ENCODE measurements at regions of chr5 and their contacts with region 1.

Region 1: DNA sequence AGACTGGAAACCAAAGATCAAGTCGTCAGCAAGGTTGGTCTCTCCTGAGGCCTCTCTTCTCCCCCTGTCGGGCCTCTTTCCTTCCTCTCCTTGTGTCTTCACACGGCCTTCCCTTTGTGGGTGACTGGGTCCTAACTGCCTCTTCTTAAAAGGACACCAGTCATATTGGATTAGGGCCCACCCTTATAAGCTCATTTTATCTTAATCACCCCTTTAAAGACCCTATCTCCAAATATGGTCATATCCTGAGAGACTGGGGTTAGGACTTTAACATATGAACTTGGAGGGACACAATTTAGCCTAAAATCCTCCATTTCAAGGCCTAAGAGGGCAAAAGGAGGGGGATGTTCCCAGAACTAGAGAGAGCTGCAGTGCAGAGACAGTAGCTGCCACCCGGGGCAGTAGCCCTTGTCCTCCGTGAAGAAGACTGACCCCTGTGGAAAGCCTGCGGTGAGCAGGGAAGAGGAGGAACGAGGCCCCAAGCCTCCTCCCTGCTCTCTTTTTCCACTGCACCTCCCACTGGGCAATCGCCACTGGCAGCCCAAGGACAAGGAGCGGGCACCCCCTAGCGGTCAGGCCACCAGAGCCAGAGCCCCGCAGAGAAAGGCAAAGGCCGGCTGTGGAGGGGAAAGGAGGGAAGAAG is 34.9 kb downstream of the CFAP90 start:
- DNase-seq: peak; percentile 20
- ATAC-seq: peak; percentile 99
- H3K4me3 ChIP-seq: no peak overlapping the region
- H3K27ac ChIP-seq: no peak overlapping the region
- H3K4me1 ChIP-seq: peaks cover 5% of the 10 kb centered on the region
- H3K27me3 ChIP-seq: no peaks in the 10 kb centered on the region; a peak in 1 of 4 replicates
- CTCF ChIP-seq: peak; percentile 97 to 99 (median 97)
- EP300 ChIP-seq: no peak
- POLR2A ChIP-seq: no peak
- RAD21 ChIP-seq: peak; percentile 94

Region 2: GRCh38 chr5:7261049-7261448 is 555.0 kb before region 1 on chr5:
- CTCF ChIA-PET with region 1: interaction called, 16 read pairs
- POLR2A ChIA-PET with region 1: no interaction called
- RAD21 ChIA-PET with region 1: interaction called, 5 read pairs
- SMC1A ChIA-PET with region 1: interaction called, 3 read pairs
- in situ Hi-C with region 1: no loop called
- intact Hi-C with region 1: loop called (anchors 1 kb)
- DNase-seq: no peak
- ATAC-seq: peak; percentile 29; the same call in 1 of the 3 replicates
- H3K4me3 ChIP-seq: no peak overlapping the region
- H3K27ac ChIP-seq: no peak overlapping the region
- H3K4me1 ChIP-seq: no peaks in the 10 kb centered on the region
- H3K27me3 ChIP-seq: no peaks in the 10 kb centered on the region
- CTCF ChIP-seq: peak; percentile 36 to 46 (median 41); a peak in 3 of 6 replicates
- EP300 ChIP-seq: no peak
- POLR2A ChIP-seq: no peak
- RAD21 ChIP-seq: peak; percentile 69

Region 3: DNA sequence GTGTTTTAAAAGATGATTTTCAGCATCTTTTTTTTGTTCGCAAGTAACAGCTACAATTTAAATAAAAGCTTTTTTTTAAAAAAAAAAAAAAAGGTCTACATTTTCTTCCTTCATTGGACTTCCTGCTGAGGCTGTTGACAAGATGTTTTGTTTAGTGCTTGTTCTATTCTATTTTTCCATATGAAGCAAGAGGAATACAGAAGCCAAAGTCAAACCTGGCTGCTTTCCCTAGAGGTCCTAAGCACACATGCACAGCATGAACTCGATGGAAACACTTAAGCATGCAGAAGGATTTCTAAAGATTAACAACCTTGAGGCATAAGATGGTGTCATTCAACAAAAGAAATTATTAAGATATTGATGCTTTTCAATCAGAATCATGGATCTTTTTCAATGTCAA is 315.0 kb before region 1 on chr5:
- CTCF ChIA-PET with region 1: no interaction called
- POLR2A ChIA-PET with region 1: no interaction called
- RAD21 ChIA-PET with region 1: no interaction called
- SMC1A ChIA-PET with region 1: no interaction called
- in situ Hi-C with region 1: no loop called
- intact Hi-C with region 1: no loop called
- DNase-seq: no peak
- ATAC-seq: no peak
- H3K4me3 ChIP-seq: no peak overlapping the region
- H3K27ac ChIP-seq: no peak overlapping the region
- H3K4me1 ChIP-seq: no peaks in the 10 kb centered on the region
- H3K27me3 ChIP-seq: no peaks in the 10 kb centered on the region
- CTCF ChIP-seq: no peak
- EP300 ChIP-seq: no peak
- POLR2A ChIP-seq: no peak
- RAD21 ChIP-seq: no peak

Region 4: GRCh38 chr5:7754992-7755596 is 60.9 kb before region 1 on chr5:
- CTCF ChIA-PET with region 1: interaction called, 39 read pairs
- POLR2A ChIA-PET with region 1: no interaction called
- RAD21 ChIA-PET with region 1: interaction called, 8 read pairs
- SMC1A ChIA-PET with region 1: interaction called, 8 read pairs
- in situ Hi-C with region 1: no loop called
- intact Hi-C with region 1: loop called (anchors 1 kb)
- DNase-seq: no peak
- ATAC-seq: peak; percentile 98
- H3K4me3 ChIP-seq: no peak overlapping the region
- H3K27ac ChIP-seq: no peak overlapping the region
- H3K4me1 ChIP-seq: no peaks in the 10 kb centered on the region
- H3K27me3 ChIP-seq: no peaks in the 10 kb centered on the region; a peak in 1 of 4 replicates
- CTCF ChIP-seq: peak; percentile 77 to 96 (median 86)
- EP300 ChIP-seq: no peak
- POLR2A ChIP-seq: no peak
- RAD21 ChIP-seq: peak; percentile 62

Region 5: DNA sequence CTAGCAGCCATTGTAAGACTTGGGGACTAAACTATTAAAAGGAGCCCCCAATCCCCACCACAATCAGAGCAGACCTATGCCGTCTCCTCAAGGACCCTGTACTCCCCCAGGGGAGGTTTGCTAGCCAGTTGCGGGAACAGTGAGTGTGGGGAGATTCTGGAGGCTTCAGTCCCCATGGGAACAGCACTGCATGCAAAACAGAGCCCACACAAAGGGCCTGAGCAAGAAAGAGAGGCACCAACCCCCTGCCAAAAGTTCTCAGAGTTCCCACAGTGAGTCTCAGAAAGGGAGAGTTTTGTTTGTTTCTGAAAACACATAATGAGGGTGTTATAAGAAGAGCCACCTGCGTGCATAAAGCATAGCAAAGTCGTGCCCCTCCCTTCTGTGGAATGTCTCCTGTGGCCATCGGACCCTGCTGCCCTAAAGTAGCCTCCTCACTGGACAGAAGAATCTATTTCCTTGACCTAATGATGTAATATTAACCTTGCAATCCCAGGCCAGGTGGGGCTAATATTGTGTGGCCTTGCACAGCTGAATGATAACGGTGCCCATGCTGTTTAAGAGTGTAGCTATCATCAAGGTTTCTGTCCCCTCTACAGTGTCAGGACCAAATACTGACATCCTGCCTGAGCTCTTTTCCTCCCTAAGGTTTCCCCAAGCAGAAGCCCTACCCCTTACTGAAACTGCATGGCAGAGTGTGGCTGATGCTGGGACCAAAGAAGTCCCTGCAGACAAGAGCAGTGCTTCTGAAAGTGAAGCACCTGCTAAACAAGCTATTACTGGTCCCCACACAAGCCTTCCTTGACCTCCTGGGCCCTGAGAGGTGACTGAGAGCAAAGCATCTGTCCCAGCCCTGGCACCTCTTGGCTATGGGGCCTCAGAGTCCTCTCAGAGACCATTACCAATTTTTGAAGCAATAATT is 21.5 kb before region 1 on chr5:
- CTCF ChIA-PET with region 1: interaction called, 6 read pairs
- POLR2A ChIA-PET with region 1: no interaction called
- RAD21 ChIA-PET with region 1: interaction called, 32 read pairs
- SMC1A ChIA-PET with region 1: interaction called, 11 read pairs
- in situ Hi-C with region 1: no loop called
- intact Hi-C with region 1: no loop called
- DNase-seq: peak; percentile 59
- ATAC-seq: peak; percentile 84
- H3K4me3 ChIP-seq: no peak overlapping the region
- H3K27ac ChIP-seq: peak overlapping the region; percentile 67
- H3K4me1 ChIP-seq: peaks cover 20% of the 10 kb centered on the region
- H3K27me3 ChIP-seq: no peaks in the 10 kb centered on the region; a peak in 1 of 4 replicates
- CTCF ChIP-seq: no peak
- EP300 ChIP-seq: peak in 1 of 2 experiments; percentile 34; a peak in 1 of 4 replicates
- POLR2A ChIP-seq: no peak
- RAD21 ChIP-seq: no peak

Region 6: GRCh38 chr5:7976411-7977190 is 160.6 kb after region 1 on chr5:
- CTCF ChIA-PET with region 1: no interaction called
- POLR2A ChIA-PET with region 1: no interaction called
- RAD21 ChIA-PET with region 1: no interaction called
- SMC1A ChIA-PET with region 1: no interaction called
- in situ Hi-C with region 1: no loop called
- intact Hi-C with region 1: no loop called
- DNase-seq: no peak
- ATAC-seq: no peak
- H3K4me3 ChIP-seq: no peak overlapping the region
- H3K27ac ChIP-seq: no peak overlapping the region
- H3K4me1 ChIP-seq: no peaks in the 10 kb centered on the region
- H3K27me3 ChIP-seq: no peaks in the 10 kb centered on the region; a peak in 1 of 4 replicates
- CTCF ChIP-seq: no peak
- EP300 ChIP-seq: no peak
- POLR2A ChIP-seq: no peak
- RAD21 ChIP-seq: no peak